Panc1 (cell line): ENCODE measurements at regions of chr3 and their contacts with region 1.

Region 1: DNA sequence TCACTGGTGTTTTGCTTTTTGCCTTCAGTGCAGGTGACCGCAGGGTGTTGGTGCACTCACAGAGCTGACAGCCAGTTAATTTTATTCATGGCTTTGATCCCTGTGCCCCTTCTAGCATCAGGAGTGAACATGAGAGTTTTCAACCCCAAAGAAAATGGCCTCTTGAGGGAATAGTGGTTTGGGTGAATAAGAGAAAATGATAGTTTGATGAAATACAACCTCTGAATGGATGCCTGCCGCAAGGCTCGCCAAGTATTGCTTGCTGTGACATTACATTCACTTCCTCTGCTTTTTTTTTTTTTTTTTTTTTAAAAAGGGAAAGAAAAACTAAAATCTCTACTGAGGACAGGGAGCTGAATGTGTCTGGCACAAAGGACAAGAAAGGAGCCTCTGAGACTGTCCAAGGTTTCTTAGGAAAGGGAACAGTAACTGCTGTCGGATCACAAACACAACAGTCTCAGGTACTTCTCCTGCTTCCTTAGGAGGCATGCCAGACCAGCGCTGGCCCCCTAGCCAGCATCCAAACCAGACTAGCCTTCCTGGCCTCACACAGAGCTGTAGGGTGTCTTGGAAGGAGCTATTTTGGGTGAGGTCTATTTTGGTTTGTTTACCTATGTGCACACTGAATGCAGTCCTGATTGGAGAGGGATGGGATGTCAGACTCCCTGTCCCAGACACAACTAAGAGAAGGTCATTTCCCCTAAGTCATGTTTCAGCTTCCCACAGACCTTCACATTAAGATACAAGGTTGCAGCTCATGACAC is 29.0 kb downstream of the CCDC80 start:
- DNase-seq: no peak
- ATAC-seq: no peak
- H3K4me3 ChIP-seq: no peak overlapping the region
- H3K27ac ChIP-seq: no peak overlapping the region
- H3K4me1 ChIP-seq: no peaks in the 10 kb centered on the region
- H3K27me3 ChIP-seq: peaks cover 6% of the 10 kb centered on the region; the same call in 1 of the 2 replicates
- CTCF ChIP-seq: no peak

Region 2: DNA sequence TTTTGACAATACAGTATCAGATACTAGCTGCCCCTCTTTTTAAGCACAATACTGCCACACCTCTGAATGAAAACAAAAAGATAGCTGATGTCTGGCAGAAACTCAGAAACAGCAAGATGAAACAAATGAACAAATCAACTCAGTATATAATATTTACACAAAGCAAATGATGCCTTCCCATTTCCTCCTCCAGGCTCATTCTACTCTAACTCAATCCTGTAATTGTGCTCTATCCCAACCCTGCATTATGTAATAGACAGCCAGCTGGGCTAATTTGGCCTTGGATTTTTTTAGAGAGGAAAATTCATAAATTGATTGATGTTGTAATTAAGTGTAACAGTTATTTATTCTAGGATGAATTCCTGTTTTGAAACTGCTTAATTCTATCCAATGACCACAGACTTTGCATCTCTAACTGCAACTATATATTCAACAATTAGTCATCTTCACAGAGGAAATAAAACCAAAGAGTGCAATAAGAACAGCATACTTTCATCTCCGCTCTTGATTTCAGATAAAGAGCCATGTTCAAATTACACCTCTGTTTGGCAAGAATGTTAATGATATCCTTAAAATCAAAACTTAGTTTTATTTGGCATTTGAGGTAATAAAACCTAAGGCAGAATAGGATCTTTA is 56.3 kb before region 1 on chr3:
- CTCF ChIA-PET with region 1: no interaction called
- POLR2A ChIA-PET with region 1: interaction called, 14 read pairs
- in situ Hi-C with region 1: no loop called
- intact Hi-C with region 1: no loop called
- DNase-seq: no peak
- ATAC-seq: no peak
- H3K4me3 ChIP-seq: no peak overlapping the region
- H3K27ac ChIP-seq: no peak overlapping the region
- H3K4me1 ChIP-seq: peaks cover 18% of the 10 kb centered on the region; the same call in 1 of the 2 replicates
- H3K27me3 ChIP-seq: no peaks in the 10 kb centered on the region
- CTCF ChIP-seq: no peak